HEK293 (cell line): ENCODE measurements at regions of chr20 and their contacts with region 1.

Region 1: DNA sequence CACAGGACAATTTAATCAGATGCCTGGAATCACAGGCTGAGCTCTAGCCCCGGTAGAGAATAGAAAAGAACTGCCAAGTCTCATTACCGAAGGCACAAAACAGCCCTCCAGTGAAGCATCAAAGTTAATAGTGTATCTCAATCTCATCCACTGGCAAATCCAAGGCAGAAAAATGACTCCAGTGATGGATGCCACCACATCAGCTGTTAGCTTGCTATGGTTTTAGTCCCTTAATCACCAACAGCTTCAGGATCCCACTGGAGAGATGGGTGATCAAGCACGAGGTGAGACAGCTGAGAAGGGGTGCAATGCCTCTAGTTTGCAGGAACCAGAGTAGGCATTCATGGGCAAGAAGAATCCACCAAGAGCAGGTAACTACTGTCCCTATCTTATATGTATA is 81.8 kb downstream of the STK35 start:
- H3K4me3 ChIP-seq: no peak overlapping the region
- H3K27ac ChIP-seq: no peak overlapping the region
- H3K4me1 ChIP-seq: no peaks in the 10 kb centered on the region
- CTCF ChIP-seq: no peak

Region 2: DNA sequence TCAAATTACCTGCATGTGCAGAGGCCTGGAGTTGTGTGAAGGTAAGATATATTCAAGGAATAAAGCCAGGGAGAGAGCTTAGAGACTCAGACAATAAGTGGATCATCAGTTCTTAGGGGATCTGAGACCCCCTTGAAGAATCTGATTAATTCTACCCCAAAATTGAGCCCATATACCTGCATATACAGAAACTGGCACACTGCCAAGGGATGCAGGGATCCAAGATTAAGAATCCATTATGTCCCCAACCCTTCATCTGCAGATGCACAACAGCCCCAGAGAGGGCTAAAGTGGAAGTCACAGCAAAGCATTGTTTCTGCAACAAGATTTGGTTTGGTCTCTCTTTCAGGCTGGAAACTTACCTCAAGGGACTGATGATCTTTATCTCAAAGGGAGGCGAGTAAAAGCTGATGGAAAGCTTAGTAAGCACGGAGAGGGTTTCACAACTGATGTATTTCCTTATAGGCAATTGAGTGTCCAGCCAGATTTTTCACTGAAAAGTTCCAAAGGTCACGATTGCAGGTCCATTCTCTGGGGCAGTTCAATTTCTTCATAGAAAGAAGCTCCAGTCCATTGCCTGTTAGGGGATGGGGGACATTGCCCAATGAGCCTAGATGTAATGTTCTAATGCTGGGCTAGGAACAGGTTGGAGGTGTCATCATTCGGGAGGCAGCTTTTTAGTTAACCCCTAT is 102.7 kb before region 1 on chr20:
- CTCF ChIA-PET with region 1: no interaction called
- POLR2A ChIA-PET with region 1: no interaction called
- H3K4me3 ChIP-seq: no peak overlapping the region
- H3K27ac ChIP-seq: no peak overlapping the region
- H3K4me1 ChIP-seq: no peaks in the 10 kb centered on the region
- CTCF ChIP-seq: no peak

Region 3: GRCh38 chr20:2197166-2197565 is 13.8 kb after region 1 on chr20:
- CTCF ChIA-PET with region 1: interaction called, 10 read pairs
- POLR2A ChIA-PET with region 1: no interaction called
- H3K4me3 ChIP-seq: no peak overlapping the region
- H3K27ac ChIP-seq: no peak overlapping the region
- H3K4me1 ChIP-seq: no peaks in the 10 kb centered on the region
- CTCF ChIP-seq: no peak

Region 4: DNA sequence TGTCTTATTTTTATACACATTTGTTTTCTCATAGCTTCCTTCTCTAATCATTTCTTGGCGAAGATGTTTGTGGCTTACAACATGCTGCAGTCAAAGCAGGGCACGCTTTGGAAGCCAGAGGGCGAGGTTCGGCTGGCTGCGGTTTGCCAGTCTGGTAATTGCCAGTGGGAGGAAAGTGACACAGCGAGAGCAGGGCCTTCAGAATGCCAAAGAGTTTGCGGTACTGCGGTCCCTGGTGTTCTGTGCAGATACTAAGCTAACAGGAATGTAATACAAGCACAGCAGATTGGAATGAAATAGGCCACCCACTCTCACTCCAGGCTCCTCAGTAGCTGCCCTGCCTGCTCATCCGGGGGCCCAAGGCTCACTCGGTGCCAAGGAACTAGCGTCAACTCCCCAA is 53.7 kb after region 1 on chr20:
- CTCF ChIA-PET with region 1: no interaction called
- POLR2A ChIA-PET with region 1: no interaction called
- H3K4me3 ChIP-seq: no peak overlapping the region
- H3K27ac ChIP-seq: no peak overlapping the region
- H3K4me1 ChIP-seq: no peaks in the 10 kb centered on the region
- CTCF ChIP-seq: no peak

Region 5: GRCh38 chr20:2255926-2256531 is 72.6 kb after region 1 on chr20:
- CTCF ChIA-PET with region 1: no interaction called
- POLR2A ChIA-PET with region 1: no interaction called
- H3K4me3 ChIP-seq: no peak overlapping the region
- H3K27ac ChIP-seq: no peak overlapping the region
- H3K4me1 ChIP-seq: no peaks in the 10 kb centered on the region
- CTCF ChIP-seq: no peak

Region 6: DNA sequence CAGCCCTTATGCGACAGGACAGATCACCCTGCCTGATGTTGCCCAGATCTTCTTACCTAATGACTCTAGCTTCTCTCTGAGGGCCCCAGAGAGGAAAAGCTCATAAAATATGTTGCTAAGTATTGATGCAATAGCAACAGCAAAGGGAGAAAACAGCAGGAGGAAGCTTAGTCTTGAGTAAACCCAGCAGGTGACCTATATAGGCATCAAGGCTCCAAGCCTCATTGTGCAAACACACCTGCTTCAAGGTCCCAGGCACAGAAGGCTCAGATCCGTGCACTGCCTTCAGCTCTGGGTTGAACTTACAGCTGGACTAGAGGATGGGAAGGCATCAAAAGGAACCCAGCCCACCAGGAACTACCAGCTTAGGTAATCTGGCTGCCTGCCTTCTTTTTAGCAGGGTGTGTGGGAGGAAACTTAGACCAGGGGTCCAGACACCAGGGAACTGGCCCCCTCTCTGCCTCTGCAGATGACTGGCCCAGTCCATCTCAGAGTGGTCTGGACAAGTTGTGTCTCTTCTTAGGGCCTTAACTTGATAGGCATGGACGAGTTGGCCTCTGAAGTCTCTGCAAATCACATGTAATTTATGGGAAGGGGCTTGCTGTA is 146.8 kb after region 1 on chr20:
- CTCF ChIA-PET with region 1: no interaction called
- POLR2A ChIA-PET with region 1: no interaction called
- H3K4me3 ChIP-seq: no peak overlapping the region
- H3K27ac ChIP-seq: no peak overlapping the region
- H3K4me1 ChIP-seq: 0 out of 2 replicates have a peak, but pooled peaks cover 3% of the 10 kb centered on the region
- CTCF ChIP-seq: no peak